Activated CD8-positive, alpha-beta T cell treated with anti-CD3 and anti-CD28 coated beads, Interleukin-2, amount 10 ng/mL, durations not matched to agents 7 days and 5 days (primary cell): ENCODE measurements at regions of chr2 and their contacts with region 1.

Region 1: DNA sequence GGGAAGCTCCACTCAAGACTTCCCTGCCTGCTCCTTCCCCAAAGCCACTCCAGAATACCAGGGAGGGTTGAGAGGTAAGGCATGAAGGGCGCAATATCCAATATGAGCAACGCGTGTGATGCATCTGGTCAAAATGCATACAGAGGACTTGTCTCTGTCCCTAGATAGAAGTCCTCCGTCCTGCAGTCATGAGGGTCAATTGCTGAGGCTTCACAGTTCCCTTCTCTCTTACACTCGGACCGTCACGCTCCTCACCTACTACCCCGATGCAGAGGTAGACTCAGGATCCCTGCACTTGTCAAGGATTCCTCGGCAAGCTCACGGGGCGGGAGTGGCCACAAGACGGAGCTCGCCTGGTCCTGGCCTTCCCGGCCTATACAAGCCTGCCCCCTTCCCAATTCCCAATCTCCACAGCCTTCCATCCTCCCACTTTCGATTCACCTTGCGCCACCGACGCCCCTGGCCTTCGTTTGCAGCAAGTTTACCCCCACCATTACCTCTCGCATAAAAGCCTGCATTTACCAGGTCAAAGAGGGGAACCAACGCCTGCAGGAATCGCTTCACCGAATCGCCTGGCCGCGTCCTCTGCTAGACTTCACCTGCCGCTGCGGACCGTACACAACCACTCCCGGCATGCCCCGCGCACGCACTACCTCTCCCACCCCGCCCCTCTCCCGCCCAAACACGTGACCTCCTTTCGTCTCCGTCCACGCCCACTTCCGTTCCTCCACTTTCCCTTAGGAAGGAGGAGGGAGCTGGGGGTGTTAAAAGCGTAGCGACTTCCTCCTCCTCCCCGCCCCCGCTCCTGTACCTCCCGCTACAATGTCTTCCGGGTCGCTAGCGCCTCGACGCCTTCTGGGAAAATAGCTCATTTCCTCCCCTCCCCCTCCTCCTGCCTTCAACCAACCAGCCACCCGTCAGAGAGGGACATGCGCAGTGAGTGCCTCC is at the start of gene ORC4:
- DNase-seq: peak; percentile 99
- ATAC-seq: peak; percentile 90
- H3K4me3 Mint-ChIP-seq: peak within 1 kb of the TSS; percentile 99
- H3K27ac Mint-ChIP-seq: peak within 1 kb of the TSS; percentile 95
- H3K4me1 Mint-ChIP-seq: peaks cover 42% of the 10 kb centered on the region
- H3K27me3 Mint-ChIP-seq: no peaks in the 10 kb centered on the region
- total RNA-seq, gene ORC4: 25.2 to 31.5 TPM

Region 2: DNA sequence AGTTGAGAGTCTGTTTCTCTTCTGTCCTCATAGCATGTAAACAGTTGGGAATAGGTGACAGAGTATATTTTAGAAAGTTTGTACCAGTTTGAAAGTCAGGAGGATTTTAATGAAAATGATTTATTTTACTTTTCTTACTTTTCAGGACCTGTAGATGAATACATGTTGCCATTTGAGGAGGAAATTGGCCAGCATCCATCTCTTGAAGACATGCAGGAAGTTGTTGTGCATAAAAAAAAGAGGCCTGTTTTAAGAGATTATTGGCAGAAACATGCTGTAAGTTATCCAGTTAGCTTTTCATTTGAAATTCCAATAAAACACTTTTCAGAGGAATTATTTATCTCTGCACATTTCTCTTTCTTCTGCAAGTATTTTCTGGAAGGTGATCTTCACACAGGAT is 94.5 kb before region 1 on chr2:
- CTCF ChIA-PET with region 1: no interaction called
- POLR2A ChIA-PET with region 1: no interaction called
- DNase-seq: no peak
- ATAC-seq: no peak
- H3K4me3 Mint-ChIP-seq: no peak overlapping the region
- H3K27ac Mint-ChIP-seq: no peak overlapping the region
- H3K4me1 Mint-ChIP-seq: no peaks in the 10 kb centered on the region
- H3K27me3 Mint-ChIP-seq: no peaks in the 10 kb centered on the region

Region 3: GRCh38 chr2:148032215-148032614 is 11.8 kb after region 1 on chr2:
- CTCF ChIA-PET with region 1: interaction called, 3 read pairs
- POLR2A ChIA-PET with region 1: interaction called, 10 read pairs
- DNase-seq: no peak
- ATAC-seq: no peak
- H3K4me3 Mint-ChIP-seq: no peak overlapping the region
- H3K27ac Mint-ChIP-seq: no peak overlapping the region
- H3K4me1 Mint-ChIP-seq: no peaks in the 10 kb centered on the region
- H3K27me3 Mint-ChIP-seq: no peaks in the 10 kb centered on the region

Region 4: GRCh38 chr2:148042219-148042618 is 21.8 kb after region 1 on chr2:
- CTCF ChIA-PET with region 1: no interaction called
- POLR2A ChIA-PET with region 1: no interaction called
- DNase-seq: no peak
- ATAC-seq: no peak
- H3K4me3 Mint-ChIP-seq: no peak overlapping the region
- H3K27ac Mint-ChIP-seq: no peak overlapping the region
- H3K4me1 Mint-ChIP-seq: peaks cover 10% of the 10 kb centered on the region
- H3K27me3 Mint-ChIP-seq: no peaks in the 10 kb centered on the region